Mammary epithelial cell (primary cell): ENCODE measurements at regions of chr11 and their contacts with region 1.

Region 1: GRCh38 chr11:127859941-127860354 is 727.4 kb downstream of the ETS1 start:
- DNase-seq: peak; percentile 46
- H3K4me3 ChIP-seq: no peak overlapping the region
- H3K27ac ChIP-seq: peak overlapping the region; percentile 47
- H3K4me1 ChIP-seq: peaks cover 24% of the 10 kb centered on the region
- H3K27me3 ChIP-seq: no peaks in the 10 kb centered on the region
- CTCF ChIP-seq: no peak

Region 2: DNA sequence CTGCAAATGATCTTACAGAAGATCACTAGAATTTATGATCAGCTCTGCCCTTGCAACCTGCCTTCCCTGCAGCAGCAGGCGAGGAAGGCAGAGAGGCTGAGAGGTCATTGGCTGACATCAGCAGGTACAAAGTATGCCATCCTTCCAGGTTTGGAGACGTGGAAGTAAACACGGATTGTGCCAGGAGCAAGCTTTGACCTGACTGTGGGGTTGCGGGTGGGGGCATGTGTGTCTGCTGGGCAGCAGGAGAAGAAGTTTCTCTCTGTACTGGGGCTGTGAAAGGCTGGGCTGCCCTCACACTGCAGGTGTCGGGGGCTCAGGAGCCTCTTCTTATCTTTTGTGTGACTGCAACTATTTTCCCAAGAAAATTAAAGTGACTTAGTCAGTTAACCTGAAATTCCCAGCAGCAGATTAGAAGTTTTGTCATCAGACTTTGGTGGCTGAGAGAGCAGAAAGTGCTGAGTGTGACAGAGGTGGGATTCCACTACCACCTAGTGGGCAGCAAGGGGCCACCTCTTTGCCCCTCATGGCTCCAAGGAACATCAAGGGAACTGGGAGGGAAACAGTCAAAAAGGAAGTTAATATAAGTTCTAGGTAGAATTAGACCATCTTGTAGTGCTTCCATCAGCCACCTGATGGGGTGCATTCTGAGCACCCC is 161.5 kb after region 1 on chr11:
- CTCF ChIA-PET with region 1: no interaction called
- dilution Hi-C with region 1: no loop called
- in situ Hi-C with region 1: loop called in 1 of 2 experiments (anchors 10 kb)
- intact Hi-C with region 1: loop called (anchors 1 kb)
- DNase-seq: no peak
- H3K4me3 ChIP-seq: no peak overlapping the region
- H3K27ac ChIP-seq: no peak overlapping the region
- H3K4me1 ChIP-seq: peaks cover 27% of the 10 kb centered on the region
- H3K27me3 ChIP-seq: no peaks in the 10 kb centered on the region
- CTCF ChIP-seq: peak; percentile 23 to 50